OCI-LY7 (cell line): ENCODE measurements at regions of chr17 and their contacts with region 1.

Region 1: GRCh38 chr17:73030501-73030921 is 62.0 kb downstream of the SLC39A11 start:
- DNase-seq: no peak
- H3K4me3 ChIP-seq: no peak overlapping the region
- H3K27ac ChIP-seq: no peak overlapping the region
- H3K4me1 ChIP-seq: no peaks in the 10 kb centered on the region
- CTCF ChIP-seq: no peak

Region 2: DNA sequence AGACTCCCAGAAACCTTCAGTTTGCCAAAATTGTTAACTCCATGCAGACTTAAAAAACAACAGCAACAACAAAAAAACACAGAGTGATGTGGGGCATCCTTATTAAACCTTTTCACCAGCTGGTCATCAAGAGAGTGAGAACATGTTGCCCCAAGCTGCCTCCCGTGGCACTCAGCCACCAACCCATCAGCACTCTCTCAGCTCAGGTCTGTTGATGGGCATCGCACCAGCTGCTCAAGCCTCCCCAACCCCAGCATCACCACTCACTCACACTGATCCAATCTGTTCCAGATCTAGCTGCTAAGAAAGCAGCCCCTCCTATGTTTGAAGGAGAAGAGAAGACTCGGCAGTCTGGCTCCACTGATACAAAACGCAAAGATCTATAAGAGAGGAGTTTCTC is 15.2 kb after region 1 on chr17:
- CTCF ChIA-PET with region 1: interaction called, 4 read pairs
- POLR2A ChIA-PET with region 1: interaction called, 10 read pairs
- intact Hi-C with region 1: no loop called
- DNase-seq: no peak
- H3K4me3 ChIP-seq: no peak overlapping the region
- H3K27ac ChIP-seq: no peak overlapping the region
- H3K4me1 ChIP-seq: no peaks in the 10 kb centered on the region
- CTCF ChIP-seq: no peak